Caco-2 (cell line): ENCODE measurements at regions of chr14 and their contacts with region 1.

Region 1: DNA sequence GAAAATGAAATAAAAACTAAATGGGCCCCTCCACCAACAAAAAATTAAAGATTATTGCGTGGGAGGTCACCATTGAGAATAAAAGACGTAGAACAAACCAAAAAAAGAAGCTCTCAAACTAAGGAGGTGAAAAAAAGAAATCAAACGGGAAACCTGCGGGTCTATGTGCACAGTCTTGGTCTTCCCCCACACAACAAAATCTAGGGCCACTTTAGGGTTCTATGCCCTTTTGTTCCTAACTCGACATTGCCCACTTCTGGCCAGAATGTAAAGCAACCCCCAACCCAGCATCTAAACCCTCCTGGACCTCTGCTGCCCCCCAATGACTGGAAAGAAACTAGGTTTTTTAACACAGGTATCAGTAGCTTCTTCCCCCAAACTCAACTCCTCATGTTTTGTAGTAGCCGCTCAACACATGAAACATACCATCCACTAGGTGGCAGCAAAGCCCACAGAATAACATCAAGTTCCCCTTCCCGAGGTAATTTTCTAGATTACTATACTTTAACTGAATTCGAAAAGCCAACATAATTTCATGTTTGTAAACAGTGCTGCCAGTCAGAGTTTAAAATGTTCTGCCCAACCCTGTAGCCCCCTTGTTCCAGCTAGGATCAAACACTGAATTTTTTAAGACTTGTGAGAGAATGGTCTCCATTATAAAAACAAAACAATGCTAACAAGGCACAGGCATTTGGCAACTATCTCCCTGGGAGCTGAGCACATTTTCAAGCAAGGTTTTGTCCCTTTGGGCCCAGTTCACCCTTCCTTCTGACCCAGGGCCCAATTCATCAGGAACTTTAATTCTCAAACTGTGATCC is 18.7 kb downstream of the DAD1 start:
- DNase-seq: peak; percentile 89 to 92
- H3K4me3 ChIP-seq: no peak overlapping the region
- H3K4me3 Mint-ChIP-seq: no peak overlapping the region
- H3K27ac Mint-ChIP-seq: peak overlapping the region; percentile 29
- H3K4me1 ChIP-seq: peaks cover 56% of the 10 kb centered on the region
- H3K4me1 Mint-ChIP-seq: peaks cover 40% of the 10 kb centered on the region
- H3K27me3 ChIP-seq: no peaks in the 10 kb centered on the region
- H3K27me3 Mint-ChIP-seq: no peaks in the 10 kb centered on the region
- CTCF ChIP-seq: peak; percentile 88 to 93

Region 2: DNA sequence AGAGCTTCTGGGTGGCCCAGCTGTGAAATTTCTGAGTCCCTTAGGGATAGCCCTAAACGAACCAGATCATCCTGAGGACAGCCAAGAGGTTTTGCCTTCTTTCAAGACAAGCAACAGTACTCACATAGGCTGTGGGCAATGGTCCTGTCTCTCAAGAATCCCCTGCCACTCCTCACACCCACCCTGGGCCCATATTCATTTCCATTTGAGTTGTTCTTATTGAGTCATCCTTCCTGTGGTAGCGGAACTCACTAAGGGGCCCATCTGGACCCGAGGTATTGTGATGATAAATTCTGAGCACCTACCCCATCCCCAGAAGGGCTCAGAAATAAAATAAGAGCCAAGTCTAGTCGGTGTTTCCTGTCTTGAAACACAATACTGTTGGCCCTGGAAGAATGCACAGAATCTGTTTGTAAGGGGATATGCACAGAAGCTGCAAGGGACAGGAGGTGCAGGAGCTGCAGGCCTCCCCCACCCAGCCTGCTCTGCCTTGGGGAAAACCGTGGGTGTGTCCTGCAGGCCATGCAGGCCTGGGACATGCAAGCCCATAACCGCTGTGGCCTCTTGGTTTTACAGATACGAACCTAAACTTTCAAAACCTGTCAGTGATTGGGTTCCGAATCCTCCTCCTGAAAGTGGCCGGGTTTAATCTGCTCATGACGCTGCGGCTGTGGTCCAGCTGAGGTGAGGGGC is 20.2 kb before region 1 on chr14:
- CTCF ChIA-PET with region 1: interaction called, 53 read pairs
- POLR2A ChIA-PET with region 1: no interaction called
- intact Hi-C with region 1: no loop called
- DNase-seq: no peak
- H3K4me3 ChIP-seq: no peak overlapping the region
- H3K4me3 Mint-ChIP-seq: no peak overlapping the region
- H3K27ac Mint-ChIP-seq: peak overlapping the region; percentile 94
- H3K4me1 ChIP-seq: peaks cover 33% of the 10 kb centered on the region
- H3K4me1 Mint-ChIP-seq: peaks cover 20% of the 10 kb centered on the region
- H3K27me3 ChIP-seq: no peaks in the 10 kb centered on the region
- H3K27me3 Mint-ChIP-seq: no peaks in the 10 kb centered on the region
- CTCF ChIP-seq: no peak

Region 3: GRCh38 chr14:22589096-22589839 is 18.9 kb after region 1 on chr14 and contains the start of gene DAD1:
- CTCF ChIA-PET with region 1: interaction called, 44 read pairs
- POLR2A ChIA-PET with region 1: interaction called, 10 read pairs
- intact Hi-C with region 1: no loop called
- DNase-seq: peak; percentile 98
- H3K4me3 ChIP-seq: peak within 1 kb of the TSS; percentile 71
- H3K4me3 Mint-ChIP-seq: peak within 1 kb of the TSS; percentile 93
- H3K27ac Mint-ChIP-seq: peak within 1 kb of the TSS; percentile 97
- H3K4me1 ChIP-seq: peaks cover 35% of the 10 kb centered on the region
- H3K4me1 Mint-ChIP-seq: peaks cover 21% of the 10 kb centered on the region
- H3K27me3 ChIP-seq: no peaks in the 10 kb centered on the region
- H3K27me3 Mint-ChIP-seq: no peaks in the 10 kb centered on the region
- CTCF ChIP-seq: no peak
- total RNA-seq, gene DAD1: 151 and 160 TPM in 2 replicates

Region 4: GRCh38 chr14:22644305-22644635 is 73.9 kb after region 1 on chr14 and contains the start of gene OR6J1:
- CTCF ChIA-PET with region 1: interaction called, 16 read pairs
- POLR2A ChIA-PET with region 1: interaction called, 3 read pairs
- intact Hi-C with region 1: loop called (anchors 1 kb)
- DNase-seq: no peak
- H3K4me3 ChIP-seq: no peak within 1 kb of the TSS
- H3K4me3 Mint-ChIP-seq: peak within 1 kb of the TSS; percentile 12
- H3K27ac Mint-ChIP-seq: peak within 1 kb of the TSS; percentile 48
- H3K4me1 ChIP-seq: peaks cover 14% of the 10 kb centered on the region
- H3K4me1 Mint-ChIP-seq: peaks cover 17% of the 10 kb centered on the region
- H3K27me3 ChIP-seq: no peaks in the 10 kb centered on the region
- H3K27me3 Mint-ChIP-seq: no peaks in the 10 kb centered on the region
- CTCF ChIP-seq: no peak
- total RNA-seq, gene OR6J1: 0.16 and 0.18 TPM in 2 replicates

Region 5: DNA sequence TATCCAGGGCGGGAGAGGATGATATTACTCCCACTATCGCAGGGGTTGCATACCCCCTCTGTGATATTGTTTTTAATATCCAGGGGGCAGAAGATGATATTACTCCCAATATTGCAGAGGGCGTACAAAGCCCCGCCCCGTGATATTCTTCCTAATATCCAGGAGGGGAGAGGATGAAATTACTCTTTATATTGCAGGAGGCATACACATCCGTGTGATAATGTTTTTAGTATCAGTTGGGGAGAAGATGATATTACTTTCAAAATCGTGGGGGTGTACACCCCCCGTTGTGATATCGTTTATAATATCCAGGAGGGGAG is 143.2 kb after region 1 on chr14:
- CTCF ChIA-PET with region 1: interaction called, 10 read pairs
- POLR2A ChIA-PET with region 1: no interaction called
- intact Hi-C with region 1: loop called (anchors 5 kb)
- DNase-seq: no peak
- H3K4me3 ChIP-seq: peak overlapping the region; percentile 31
- H3K4me3 Mint-ChIP-seq: peak overlapping the region; percentile 77
- H3K27ac Mint-ChIP-seq: peak overlapping the region; percentile 66
- H3K4me1 ChIP-seq: no peaks in the 10 kb centered on the region; the same call in 1 of the 2 replicates
- H3K4me1 Mint-ChIP-seq: no peaks in the 10 kb centered on the region
- H3K27me3 ChIP-seq: no peaks in the 10 kb centered on the region
- H3K27me3 Mint-ChIP-seq: peaks cover 8% of the 10 kb centered on the region
- CTCF ChIP-seq: no peak

Region 6: GRCh38 chr14:22766456-22767322 is 196.3 kb after region 1 on chr14 and contains the start of gene OXA1L:
- CTCF ChIA-PET with region 1: interaction called, 17 read pairs
- POLR2A ChIA-PET with region 1: interaction called, 4 read pairs
- intact Hi-C with region 1: loop called (anchors 2 kb)
- DNase-seq: peak; percentile 94 to 97
- H3K4me3 ChIP-seq: peak within 1 kb of the TSS; percentile 77
- H3K4me3 Mint-ChIP-seq: peak within 1 kb of the TSS; percentile 93
- H3K27ac Mint-ChIP-seq: peak within 1 kb of the TSS; percentile 98
- H3K4me1 ChIP-seq: no peaks in the 10 kb centered on the region
- H3K4me1 Mint-ChIP-seq: peaks cover 29% of the 10 kb centered on the region
- H3K27me3 ChIP-seq: no peaks in the 10 kb centered on the region
- H3K27me3 Mint-ChIP-seq: no peaks in the 10 kb centered on the region
- CTCF ChIP-seq: no peak
- total RNA-seq, gene OXA1L: 110 and 116 TPM in 2 replicates

Region 7: GRCh38 chr14:22852940-22853767 is 282.8 kb after region 1 on chr14:
- CTCF ChIA-PET with region 1: interaction called, 14 read pairs
- POLR2A ChIA-PET with region 1: no interaction called
- intact Hi-C with region 1: loop called (anchors 1 kb)
- DNase-seq: peak; percentile 89 to 92
- H3K4me3 ChIP-seq: peak overlapping the region; percentile 35
- H3K4me3 Mint-ChIP-seq: peak overlapping the region; percentile 69
- H3K27ac Mint-ChIP-seq: peak overlapping the region; percentile 68
- H3K4me1 ChIP-seq: peaks cover 25% of the 10 kb centered on the region
- H3K4me1 Mint-ChIP-seq: peaks cover 7% of the 10 kb centered on the region
- H3K27me3 ChIP-seq: no peaks in the 10 kb centered on the region
- H3K27me3 Mint-ChIP-seq: no peaks in the 10 kb centered on the region
- CTCF ChIP-seq: peak; percentile 87 to 91